Left colon (tissue), 2 donors: ENCODE measurements at regions of chr20 and their contacts with region 1.

Region 1: GRCh38 chr20:17431621-17432364 is 99.4 kb downstream of the BFSP1 start:
- DNase-seq: peak in 1 of 2 donors; percentile 40
- ATAC-seq: no peak

Region 2: DNA sequence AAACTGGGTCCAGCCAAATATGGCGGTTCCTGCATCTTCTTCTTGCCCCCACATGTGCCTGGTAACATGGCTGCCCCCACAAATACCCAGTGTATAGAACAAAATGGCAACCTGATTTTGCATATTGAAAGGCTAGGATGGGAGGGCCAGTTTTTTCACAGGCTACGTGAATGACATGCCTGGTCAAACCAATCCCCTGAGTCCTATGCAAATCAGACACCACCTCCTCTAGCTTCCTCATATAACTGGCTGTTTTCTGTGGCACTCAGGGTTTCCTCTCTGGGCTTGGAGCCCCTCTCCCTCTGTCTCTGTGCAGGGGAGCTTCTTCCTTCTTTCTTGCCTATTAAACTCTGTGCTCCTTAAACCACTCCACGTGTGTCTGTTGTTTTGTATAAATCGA is 1230.6 kb before region 1 on chr20:
- intact Hi-C with region 1: no loop called
- DNase-seq: no peak
- ATAC-seq: no peak

Region 3: GRCh38 chr20:16801919-16802911 is 629.6 kb before region 1 on chr20:
- intact Hi-C with region 1: loop called in 1 of 2 experiments (anchors 5 kb)
- DNase-seq: peak in 1 of 2 donors; percentile 69
- ATAC-seq: peak; percentile 38

Region 4: DNA sequence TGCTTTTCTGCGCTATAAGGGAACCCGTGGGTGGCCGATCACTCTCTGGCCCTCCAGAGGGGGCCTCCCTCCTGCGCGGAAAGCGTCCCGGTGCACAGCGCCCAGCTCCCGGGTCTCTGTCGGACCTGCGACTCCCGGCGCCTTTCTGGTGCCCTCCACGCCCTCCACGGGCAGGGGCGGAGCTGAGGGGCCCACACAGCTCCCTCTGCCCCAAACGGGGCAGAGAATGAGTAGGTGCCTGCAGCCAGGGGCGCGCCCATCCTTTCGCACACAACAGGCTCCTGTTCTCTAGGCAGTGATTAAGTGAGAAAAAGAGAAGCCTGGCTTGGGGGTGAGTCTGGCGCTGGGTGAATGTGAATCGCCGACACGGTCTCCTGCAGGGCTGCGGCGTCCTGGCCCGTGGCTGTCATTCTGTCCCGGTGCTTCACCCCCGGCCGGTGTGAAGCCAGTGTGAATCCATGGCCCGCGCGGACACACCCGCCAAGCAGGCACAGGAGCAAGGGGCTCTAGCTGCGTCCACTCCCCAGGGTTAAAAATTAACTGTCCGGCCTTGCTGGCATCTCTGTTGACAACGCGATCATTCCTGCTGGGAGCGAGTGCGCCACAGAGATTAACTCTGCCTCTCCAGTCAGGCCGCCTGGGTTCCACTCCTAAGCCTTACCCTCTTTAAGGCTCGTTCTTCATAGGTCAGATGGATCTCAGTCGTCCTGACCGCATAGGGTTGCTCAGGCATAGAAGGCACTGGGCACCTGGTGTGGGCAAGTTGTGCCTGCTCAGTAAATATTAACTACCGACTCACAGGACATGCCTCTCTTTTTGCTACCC is 116.2 kb before region 1 on chr20:
- intact Hi-C with region 1: no loop called
- DNase-seq: no peak
- ATAC-seq: no peak

Region 5: GRCh38 chr20:17377231-17377630 is 54.6 kb before region 1 on chr20:
- intact Hi-C with region 1: no loop called
- DNase-seq: no peak
- ATAC-seq: no peak